ENCODE measurements at regions of chr15 and their contacts with region 1.

Region 1: DNA sequence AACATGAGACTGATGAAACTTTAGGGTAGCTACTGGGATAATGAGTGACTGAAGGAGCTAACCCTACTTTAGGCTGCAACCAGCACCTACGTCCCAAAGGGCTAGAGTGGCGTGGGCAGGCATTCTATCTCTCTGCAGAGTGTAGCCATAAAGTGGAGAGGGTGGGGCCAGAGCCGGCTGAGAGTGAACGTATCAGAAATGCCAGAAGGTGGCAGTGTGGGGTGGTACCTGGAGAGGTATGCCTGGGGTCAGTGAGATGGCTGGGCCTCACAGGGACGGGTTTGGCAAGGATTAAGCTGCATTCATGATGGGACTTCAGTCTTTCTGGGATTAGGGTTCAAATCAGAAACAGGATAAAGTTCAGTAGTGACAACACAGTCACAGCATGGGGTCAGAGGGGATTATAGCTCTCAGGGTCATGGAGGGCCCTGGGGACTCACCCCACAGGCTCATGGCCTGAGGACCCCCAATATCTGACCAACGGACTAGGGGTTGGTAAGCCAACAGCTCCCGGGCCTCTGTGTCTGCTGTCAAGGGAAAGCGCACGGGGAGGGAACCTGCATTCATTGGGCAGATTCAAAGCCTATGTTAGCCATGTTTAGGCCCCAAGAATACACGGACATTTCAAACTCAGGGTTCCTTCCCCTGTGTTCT is 86.5 kb upstream of the FOXB1 start:
- DNase-seq: peak; percentile 79
- H3K4me3 Mint-ChIP-seq: no peak overlapping the region
- H3K27ac Mint-ChIP-seq: no peak overlapping the region
- H3K4me1 Mint-ChIP-seq: peaks cover 27% of the 10 kb centered on the region
- H3K27me3 Mint-ChIP-seq: peaks cover 22% of the 10 kb centered on the region

Region 2: GRCh38 chr15:59662260-59662659 is 255.4 kb before region 1 on chr15:
- CTCF ChIA-PET with region 1: no interaction called
- POLR2A ChIA-PET with region 1: no interaction called
- DNase-seq: no peak
- H3K4me3 Mint-ChIP-seq: no peak overlapping the region
- H3K27ac Mint-ChIP-seq: no peak overlapping the region
- H3K4me1 Mint-ChIP-seq: peaks cover 11% of the 10 kb centered on the region
- H3K27me3 Mint-ChIP-seq: no peaks in the 10 kb centered on the region

Region 3: GRCh38 chr15:59997070-59997701 is 79.6 kb after region 1 on chr15:
- CTCF ChIA-PET with region 1: interaction called, 11 read pairs
- POLR2A ChIA-PET with region 1: no interaction called
- DNase-seq: peak; percentile 73
- H3K4me3 Mint-ChIP-seq: peak overlapping the region; percentile 58
- H3K27ac Mint-ChIP-seq: peak overlapping the region; percentile 13
- H3K4me1 Mint-ChIP-seq: peaks cover 67% of the 10 kb centered on the region
- H3K27me3 Mint-ChIP-seq: peaks cover 100% of the 10 kb centered on the region

Region 4: DNA sequence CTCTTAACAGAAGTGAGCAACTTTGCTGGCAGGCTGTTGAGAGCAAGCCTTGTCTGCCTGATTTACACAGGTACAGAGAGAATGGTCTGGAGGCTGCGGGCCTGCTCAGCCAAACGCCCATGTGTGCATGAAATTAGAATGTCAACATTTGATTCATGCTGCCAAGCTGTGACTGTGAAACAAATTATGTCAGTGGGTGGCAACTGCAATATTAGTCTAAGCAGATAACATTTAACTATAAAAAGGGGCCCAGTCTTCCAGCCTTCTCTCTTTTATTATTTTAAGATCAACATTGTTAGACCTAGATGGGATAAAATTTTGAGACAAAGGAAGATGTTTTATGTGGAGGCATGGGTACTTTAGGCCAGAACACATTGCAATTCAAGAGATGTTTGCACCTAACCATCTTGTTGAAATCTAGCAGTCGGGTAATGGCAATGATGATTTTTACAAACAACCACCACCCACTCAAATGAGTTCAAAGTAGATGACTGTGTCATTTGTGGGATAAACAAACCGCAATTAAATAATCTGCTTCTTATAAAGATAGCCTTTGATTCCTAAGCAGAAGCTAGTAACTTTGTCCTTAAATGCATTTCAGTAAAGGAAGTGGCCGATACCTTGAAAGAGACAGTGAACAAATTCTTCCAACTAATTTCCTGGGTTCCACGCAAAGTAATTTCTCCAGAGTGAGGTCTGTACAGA is 156.7 kb after region 1 on chr15:
- CTCF ChIA-PET with region 1: no interaction called
- POLR2A ChIA-PET with region 1: no interaction called
- DNase-seq: no peak
- H3K4me3 Mint-ChIP-seq: no peak overlapping the region
- H3K27ac Mint-ChIP-seq: no peak overlapping the region
- H3K4me1 Mint-ChIP-seq: peaks cover 41% of the 10 kb centered on the region
- H3K27me3 Mint-ChIP-seq: no peaks in the 10 kb centered on the region